H1 (cell line): ENCODE measurements at regions of chr4 and their contacts with region 1.

Region 1: GRCh38 chr4:143360838-143361625 is 24.4 kb downstream of the GAB1 start:
- DNase-seq: no peak
- H3K4me3 ChIP-seq: no peak overlapping the region
- H3K27ac ChIP-seq: no peak overlapping the region
- H3K4me1 ChIP-seq: peaks cover 2 to 15% (median 11%) of the 10 kb centered on the region in 4 experiments; a peak in 6 of 7 replicates
- H3K27me3 ChIP-seq: peaks cover 0 to 1% (median 0%) of the 10 kb centered on the region in 4 experiments; a peak in 1 of 7 replicates
- CTCF ChIP-seq: no peak
- EP300 ChIP-seq: no peak
- POLR2A ChIP-seq: no peak
- RAD21 ChIP-seq: no peak

Region 2: GRCh38 chr4:143375313-143376073 is 14.5 kb after region 1 on chr4:
- CTCF ChIA-PET with region 1: interaction called, 11 read pairs
- POLR2A ChIA-PET with region 1: no interaction called
- DNase-seq: no peak
- H3K4me3 ChIP-seq: no peak overlapping the region
- H3K27ac ChIP-seq: no peak overlapping the region
- H3K4me1 ChIP-seq: peaks cover 0 to 4% (median 0%) of the 10 kb centered on the region in 4 experiments; a peak in 2 of 7 replicates
- H3K27me3 ChIP-seq: no peaks in the 10 kb centered on the region
- CTCF ChIP-seq: peak; percentile 49 to 62 (median 57)
- EP300 ChIP-seq: no peak
- POLR2A ChIP-seq: no peak
- RAD21 ChIP-seq: peak; percentile 67 to 75

Region 3: DNA sequence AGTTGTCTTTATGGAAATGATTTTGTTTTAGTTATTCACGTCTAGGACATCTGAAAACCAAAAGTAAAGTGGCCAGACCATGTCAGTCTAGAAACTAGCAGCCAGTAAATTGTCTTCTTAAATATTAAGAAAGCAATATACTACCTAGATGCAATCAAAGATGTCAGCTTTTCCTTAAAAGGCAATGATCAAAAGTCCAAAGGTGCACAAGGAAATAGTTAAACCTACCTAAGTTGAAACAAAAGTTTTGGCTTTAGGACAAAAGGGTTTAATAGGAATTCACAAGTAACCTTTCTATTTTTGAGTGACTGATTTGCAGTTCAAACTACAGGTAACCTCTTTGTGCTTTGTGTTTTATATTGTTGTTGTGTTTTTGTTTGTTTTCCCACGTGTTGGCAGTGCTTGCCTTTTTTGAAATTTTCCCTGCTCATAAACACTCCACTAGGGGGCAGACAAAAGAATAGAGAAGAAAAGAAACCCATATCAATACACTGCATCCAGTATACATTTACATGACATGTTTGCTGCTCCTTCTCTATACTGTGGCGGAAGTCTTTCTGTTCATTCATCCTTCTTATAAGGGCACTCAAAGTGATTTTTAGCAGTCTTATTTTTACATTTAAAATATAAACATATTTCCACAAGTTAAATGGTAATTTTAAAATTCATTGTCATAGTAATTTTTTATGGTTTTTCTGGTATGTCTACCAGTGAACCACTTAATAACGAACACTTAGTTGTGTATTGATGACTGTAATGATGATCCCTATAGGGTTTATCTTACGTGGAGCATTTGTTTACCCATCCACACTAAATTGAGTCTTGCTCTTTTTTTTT is 38.3 kb after region 1 on chr4:
- CTCF ChIA-PET with region 1: no interaction called
- POLR2A ChIA-PET with region 1: no interaction called
- DNase-seq: no peak
- H3K4me3 ChIP-seq: no peak overlapping the region
- H3K27ac ChIP-seq: no peak overlapping the region
- H3K4me1 ChIP-seq: peaks cover 0 to 4% (median 0%) of the 10 kb centered on the region in 4 experiments; a peak in 1 of 7 replicates
- H3K27me3 ChIP-seq: peaks cover 0 to 1% (median 0%) of the 10 kb centered on the region in 4 experiments; a peak in 1 of 7 replicates
- CTCF ChIP-seq: peak in 2 of 3 experiments; percentile 35 to 59; a peak in 2 of 4 replicates
- EP300 ChIP-seq: no peak
- POLR2A ChIP-seq: no peak
- RAD21 ChIP-seq: peak; percentile 11 to 48; a peak in 2 of 4 replicates